ENCODE measurements at regions of chr4 and their contacts with region 1.

Region 1: GRCh38 chr4:4867375-4868039 is 8.0 kb downstream of the MSX1 start:
- DNase-seq: peak; percentile 46
- ATAC-seq: no peak
- H3K4me3 Mint-ChIP-seq: no peak overlapping the region
- H3K27ac Mint-ChIP-seq: no peak overlapping the region
- H3K4me1 Mint-ChIP-seq: peaks cover 17% of the 10 kb centered on the region
- H3K27me3 Mint-ChIP-seq: peaks cover 68% of the 10 kb centered on the region

Region 2: GRCh38 chr4:4852591-4853375 is 14.7 kb before region 1 on chr4:
- CTCF ChIA-PET with region 1: no interaction called
- POLR2A ChIA-PET with region 1: interaction called, 3 read pairs
- intact Hi-C with region 1: loop called (anchors 1 to 2 kb)
- DNase-seq: peak; percentile 64
- ATAC-seq: peak; percentile 70
- H3K4me3 Mint-ChIP-seq: peak overlapping the region; percentile 58
- H3K27ac Mint-ChIP-seq: no peak overlapping the region
- H3K4me1 Mint-ChIP-seq: peaks cover 31% of the 10 kb centered on the region
- H3K27me3 Mint-ChIP-seq: peaks cover 53% of the 10 kb centered on the region

Measured in activated CD4-positive, alpha-beta T cell treated with anti-CD3 and anti-CD28 coated beads for 36 hours (primary cell).